GM12878 (cell line): ENCODE measurements at regions of chr2 and their contacts with region 1.

Region 1: GRCh38 chr2:120231974-120232635 is 8.9 kb upstream of the TMEM185B start:
- DNase-seq: peak; percentile 86
- ATAC-seq: peak; percentile 85
- H3K4me3 ChIP-seq: peak overlapping the region; percentile 89
- H3K27ac ChIP-seq: peak overlapping the region; percentile 97
- H3K4me1 ChIP-seq: peaks cover 18% of the 10 kb centered on the region
- H3K27me3 ChIP-seq: no peaks in the 10 kb centered on the region
- CTCF ChIP-seq: no peak
- EP300 ChIP-seq: peak in 1 of 2 experiments; percentile 37; a peak in 2 of 4 replicates
- POLR2A ChIP-seq: peak; percentile 70
- RAD21 ChIP-seq: no peak

Region 2: DNA sequence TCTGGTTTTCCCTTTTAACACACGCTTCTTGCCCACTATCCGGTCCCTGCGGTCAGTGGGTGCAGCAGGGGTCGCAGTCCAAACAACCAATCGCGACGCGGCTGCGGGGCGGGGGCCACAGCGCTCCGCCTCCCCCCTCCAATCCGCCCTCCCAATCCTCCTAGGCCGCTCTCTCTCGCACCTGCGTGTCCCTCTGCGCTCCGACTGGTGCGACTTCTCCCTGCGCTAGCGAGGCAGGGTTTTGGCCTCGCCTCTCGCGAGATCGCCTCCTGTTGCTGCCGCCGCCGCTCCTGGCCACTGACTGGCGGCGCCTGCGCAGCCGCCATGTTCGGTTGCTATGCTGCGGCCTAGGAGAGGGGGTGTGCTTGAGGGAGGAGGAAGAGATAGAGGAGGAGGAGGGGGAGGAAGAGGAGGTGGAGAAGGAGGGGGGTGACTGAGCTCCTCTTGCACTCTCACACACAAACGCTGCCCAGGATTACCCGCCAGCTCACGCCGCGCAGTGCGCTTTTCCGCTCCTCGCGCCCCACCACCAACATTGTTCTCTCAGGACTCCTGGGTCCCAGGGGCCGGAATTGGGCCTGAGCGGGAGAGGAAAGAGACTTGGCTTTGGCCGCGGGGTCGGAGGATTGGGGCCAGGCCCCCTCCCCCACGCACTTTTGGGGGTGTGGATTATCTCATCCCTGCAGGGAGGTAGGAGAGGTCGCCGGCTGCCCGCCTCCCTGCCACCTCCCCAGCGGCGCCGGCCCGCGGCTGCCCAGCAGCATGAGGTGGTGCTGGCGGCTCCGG is 472.5 kb before region 1 on chr2 and contains the start of gene PTPN4:
- CTCF ChIA-PET with region 1: no interaction called
- POLR2A ChIA-PET with region 1: no interaction called
- RAD21 ChIA-PET with region 1: interaction called, 4 read pairs
- SMC1A ChIA-PET with region 1: no interaction called
- in situ Hi-C with region 1: no loop called
- intact Hi-C with region 1: loop called (anchors 5 kb)
- DNase-seq: peak; percentile 95
- ATAC-seq: peak; percentile 93
- H3K4me3 ChIP-seq: peak within 1 kb of the TSS; percentile 98
- H3K27ac ChIP-seq: peak within 1 kb of the TSS; percentile 85
- H3K4me1 ChIP-seq: no peaks in the 10 kb centered on the region
- H3K27me3 ChIP-seq: no peaks in the 10 kb centered on the region; a peak in 1 of 4 replicates
- CTCF ChIP-seq: no peak; a peak in 1 of 6 replicates
- EP300 ChIP-seq: peak in 1 of 2 experiments; percentile 21; a peak in 1 of 4 replicates
- POLR2A ChIP-seq: peak; percentile 94
- RAD21 ChIP-seq: 0 out of 2 replicates have a peak, but pooled peaks have one; percentile 3
- polyA plus RNA-seq, gene PTPN4: 5.0 to 7.4 TPM

Region 3: GRCh38 chr2:120287183-120288015 is 55.3 kb after region 1 on chr2:
- CTCF ChIA-PET with region 1: interaction called, 7 read pairs
- POLR2A ChIA-PET with region 1: interaction called, 4 read pairs
- RAD21 ChIA-PET with region 1: interaction called, 3 read pairs
- SMC1A ChIA-PET with region 1: interaction called, 9 read pairs
- in situ Hi-C with region 1: no loop called
- intact Hi-C with region 1: loop called (anchors 2 kb)
- DNase-seq: peak; percentile 80
- ATAC-seq: peak; percentile 98
- H3K4me3 ChIP-seq: peak overlapping the region; percentile 42
- H3K27ac ChIP-seq: peak overlapping the region; percentile 98
- H3K4me1 ChIP-seq: peaks cover 17% of the 10 kb centered on the region
- H3K27me3 ChIP-seq: no peaks in the 10 kb centered on the region
- CTCF ChIP-seq: no peak
- EP300 ChIP-seq: peak; percentile 78 to 92
- POLR2A ChIP-seq: peak; percentile 58
- RAD21 ChIP-seq: no peak; the same call in 1 of the 2 replicates

Region 4: DNA sequence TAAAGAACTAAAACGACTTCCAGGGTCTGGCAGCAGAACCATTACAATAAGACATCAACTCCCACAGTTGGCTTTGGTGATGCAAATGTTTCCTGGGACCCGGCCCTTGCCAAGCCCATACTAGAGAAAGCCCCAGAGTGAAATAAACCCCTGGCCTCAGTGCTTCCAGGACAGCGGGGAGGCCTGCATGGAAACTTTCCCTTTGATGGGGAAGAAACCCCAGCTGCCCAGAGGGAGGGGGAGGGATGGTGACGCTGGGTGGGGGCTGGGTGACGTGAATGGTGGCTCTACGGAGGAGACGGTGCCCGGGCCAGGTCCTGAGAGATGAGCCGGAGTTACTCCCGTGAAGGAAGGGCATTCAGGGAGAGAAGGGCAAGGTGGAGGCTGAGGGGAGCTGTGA is 141.3 kb after region 1 on chr2:
- CTCF ChIA-PET with region 1: no interaction called
- POLR2A ChIA-PET with region 1: no interaction called
- RAD21 ChIA-PET with region 1: no interaction called
- SMC1A ChIA-PET with region 1: no interaction called
- in situ Hi-C with region 1: no loop called
- intact Hi-C with region 1: no loop called
- DNase-seq: no peak
- ATAC-seq: no peak
- H3K4me3 ChIP-seq: no peak overlapping the region
- H3K27ac ChIP-seq: no peak overlapping the region
- H3K4me1 ChIP-seq: no peaks in the 10 kb centered on the region
- H3K27me3 ChIP-seq: no peaks in the 10 kb centered on the region; a peak in 2 of 4 replicates
- CTCF ChIP-seq: no peak
- EP300 ChIP-seq: no peak
- POLR2A ChIP-seq: no peak
- RAD21 ChIP-seq: no peak